SK-N-SH (cell line): ENCODE measurements at regions of chr20 and their contacts with region 1.

Region 1: GRCh38 chr20:38730989-38731737 is 6.9 kb downstream of the SLC32A1 start:
- DNase-seq: peak; percentile 90
- H3K4me3 ChIP-seq: peak overlapping the region; percentile 41 to 53
- H3K27ac ChIP-seq: no peak overlapping the region
- H3K4me1 ChIP-seq: peaks cover 0 to 16% of the 10 kb centered on the region in 2 experiments; a peak in 2 of 4 replicates
- H3K27me3 ChIP-seq: peaks cover 93% of the 10 kb centered on the region
- CTCF ChIP-seq: peak; percentile 97
- EP300 ChIP-seq: no peak
- RAD21 ChIP-seq: peak; percentile 73

Region 2: DNA sequence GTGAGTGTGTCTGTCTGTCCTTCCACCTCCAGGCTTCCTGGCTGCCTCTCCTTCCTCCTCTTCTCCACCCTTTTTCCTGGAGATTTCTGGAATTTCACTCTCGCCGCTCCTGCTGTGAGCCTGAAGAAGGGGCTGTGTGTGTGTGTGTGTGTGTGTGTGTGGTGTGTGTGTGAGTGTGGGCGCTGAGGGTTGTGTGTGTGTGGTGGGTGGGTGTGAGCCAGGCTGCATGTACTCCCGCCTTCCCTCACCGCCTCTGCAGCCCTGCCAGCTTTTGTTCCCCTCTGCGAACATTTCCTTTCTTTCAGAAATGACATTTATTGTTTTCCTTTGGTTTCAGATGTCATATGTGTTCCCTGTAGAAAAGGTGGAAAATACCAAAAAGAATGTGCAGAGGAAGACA is 1309.2 kb before region 1 on chr20:
- CTCF ChIA-PET with region 1: no interaction called
- POLR2A ChIA-PET with region 1: no interaction called
- DNase-seq: no peak
- H3K4me3 ChIP-seq: no peak overlapping the region
- H3K27ac ChIP-seq: no peak overlapping the region
- H3K4me1 ChIP-seq: peaks cover 0 to 14% of the 10 kb centered on the region in 2 experiments; a peak in 1 of 4 replicates
- H3K27me3 ChIP-seq: peaks cover 37% of the 10 kb centered on the region; the same call in 1 of the 2 replicates
- CTCF ChIP-seq: no peak
- EP300 ChIP-seq: no peak
- RAD21 ChIP-seq: no peak

Region 3: DNA sequence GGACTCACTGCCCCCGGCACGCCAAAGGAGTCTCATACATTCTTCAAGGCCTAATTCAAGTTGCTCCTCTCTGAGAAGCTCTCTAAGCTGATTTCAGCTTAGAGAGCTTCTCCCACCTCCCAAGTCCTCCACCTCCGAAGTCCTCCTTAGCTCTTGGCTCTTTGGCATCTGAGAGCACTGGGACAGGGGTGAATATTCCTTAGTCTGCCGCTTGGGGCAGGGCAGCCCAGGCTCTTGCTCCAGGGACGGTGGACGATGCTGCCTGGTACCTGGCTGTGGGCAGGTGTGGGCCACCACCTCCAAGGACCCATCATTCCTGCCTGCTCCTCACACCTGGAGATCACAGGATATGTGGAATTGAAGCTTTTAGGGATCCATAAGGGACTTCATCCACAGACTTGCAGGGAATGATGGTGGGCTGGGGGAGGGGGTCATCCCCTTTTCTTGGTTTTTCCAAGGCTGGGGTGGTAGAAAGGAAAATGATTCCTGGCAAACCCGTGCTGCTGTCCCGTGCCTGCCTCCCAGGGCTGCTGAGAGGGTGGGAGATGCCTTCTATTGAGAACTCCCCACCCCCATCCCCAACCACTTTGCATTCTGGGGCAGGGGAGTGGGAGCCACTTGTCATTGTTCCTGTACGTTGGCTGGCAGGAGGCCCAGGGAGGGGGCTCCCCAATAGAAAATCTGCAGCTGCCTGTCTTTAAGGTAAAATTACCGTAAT is 72.1 kb before region 1 on chr20:
- CTCF ChIA-PET with region 1: interaction called, 10 read pairs
- POLR2A ChIA-PET with region 1: no interaction called
- DNase-seq: peak; percentile 45
- H3K4me3 ChIP-seq: no peak overlapping the region; a peak in 1 of 4 replicates
- H3K27ac ChIP-seq: no peak overlapping the region
- H3K4me1 ChIP-seq: no peaks in the 10 kb centered on the region
- H3K27me3 ChIP-seq: no peaks in the 10 kb centered on the region
- CTCF ChIP-seq: peak; percentile 22; the same call in 1 of the 2 replicates
- EP300 ChIP-seq: no peak
- RAD21 ChIP-seq: peak; percentile 41

Region 4: DNA sequence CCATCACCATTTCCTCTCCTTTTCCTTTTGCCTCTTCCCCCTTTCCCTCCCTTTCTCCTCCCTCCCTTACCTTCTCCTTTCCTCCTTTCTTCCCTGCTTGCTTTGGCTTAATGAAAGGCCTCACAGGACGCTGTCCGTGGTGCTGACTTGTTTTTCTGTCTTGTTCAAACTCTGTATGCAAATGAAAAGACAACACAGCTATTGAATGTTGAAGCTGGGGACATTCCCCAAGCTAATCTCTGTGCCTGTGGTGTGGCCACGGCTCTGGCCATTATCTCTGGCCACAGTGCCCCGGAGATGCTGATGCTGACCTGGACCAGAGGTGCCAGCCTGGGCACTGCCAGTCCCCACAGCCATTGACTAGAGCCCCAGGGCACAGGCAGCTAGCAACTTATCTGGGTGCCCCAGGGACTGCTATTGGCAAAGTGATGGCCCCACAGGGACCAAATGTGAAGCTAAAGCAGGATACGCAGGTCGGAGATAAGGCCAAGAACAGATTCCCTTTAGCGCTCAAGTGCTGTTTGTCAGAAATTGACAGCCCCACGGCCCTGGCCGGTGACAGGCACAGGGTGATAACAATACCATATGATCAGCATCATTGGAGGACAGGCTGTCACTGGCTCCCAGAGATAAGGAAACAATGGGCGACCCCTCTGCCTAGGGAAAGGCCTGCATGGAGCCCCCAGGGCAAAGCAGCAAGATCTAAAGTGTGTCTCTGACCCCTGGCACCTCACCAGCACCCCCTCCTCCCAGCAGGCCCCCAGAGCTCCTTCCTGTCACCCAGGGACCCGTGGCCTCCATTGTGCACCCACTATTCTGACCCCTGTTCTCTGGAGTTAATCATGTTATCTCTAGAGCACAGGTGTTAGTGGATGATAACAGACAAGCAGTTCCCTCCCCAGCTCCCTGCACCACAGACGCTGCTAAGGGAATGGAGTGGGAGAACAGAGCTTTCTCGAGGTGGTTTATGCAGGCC is 38.4 kb before region 1 on chr20:
- CTCF ChIA-PET with region 1: interaction called, 47 read pairs
- POLR2A ChIA-PET with region 1: no interaction called
- DNase-seq: peak; percentile 73
- H3K4me3 ChIP-seq: no peak overlapping the region
- H3K27ac ChIP-seq: peak overlapping the region in 1 of 2 experiments; percentile 58; a peak in 2 of 4 replicates
- H3K4me1 ChIP-seq: peaks cover 0 to 20% of the 10 kb centered on the region in 2 experiments; a peak in 1 of 4 replicates
- H3K27me3 ChIP-seq: no peaks in the 10 kb centered on the region
- CTCF ChIP-seq: no peak
- EP300 ChIP-seq: peak in 1 of 2 experiments; percentile 75; a peak in 2 of 4 replicates
- RAD21 ChIP-seq: no peak

Region 5: DNA sequence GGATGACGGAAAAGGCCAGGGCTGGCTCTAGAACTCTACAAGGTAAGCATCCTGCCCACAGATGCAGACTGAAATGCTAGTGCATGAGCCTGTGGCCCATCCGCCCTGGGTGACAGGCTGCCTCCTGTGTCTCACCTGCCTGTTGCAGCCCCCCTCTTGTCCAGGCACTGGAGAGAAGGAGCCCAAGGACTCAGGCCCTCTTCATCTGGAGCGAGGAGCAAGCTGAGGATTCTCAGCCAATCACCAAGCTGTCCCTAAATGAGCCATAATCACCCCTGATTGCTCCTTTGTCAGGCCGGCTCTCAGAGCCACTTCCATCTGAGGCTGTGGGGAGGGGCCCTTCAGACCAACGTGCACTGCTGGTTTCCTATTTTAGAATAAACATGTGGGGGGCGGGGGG is 16.9 kb before region 1 on chr20:
- CTCF ChIA-PET with region 1: interaction called, 127 read pairs
- POLR2A ChIA-PET with region 1: no interaction called
- DNase-seq: no peak
- H3K4me3 ChIP-seq: no peak overlapping the region
- H3K27ac ChIP-seq: no peak overlapping the region
- H3K4me1 ChIP-seq: no peaks in the 10 kb centered on the region
- H3K27me3 ChIP-seq: peaks cover 12% of the 10 kb centered on the region
- CTCF ChIP-seq: no peak
- EP300 ChIP-seq: no peak
- RAD21 ChIP-seq: no peak

Region 6: GRCh38 chr20:38893565-38894090 is 162.5 kb after region 1 on chr20:
- CTCF ChIA-PET with region 1: interaction called, 30 read pairs
- POLR2A ChIA-PET with region 1: no interaction called
- DNase-seq: peak; percentile 91
- H3K4me3 ChIP-seq: no peak overlapping the region; a peak in 2 of 4 replicates
- H3K27ac ChIP-seq: peak overlapping the region in 1 of 2 experiments; percentile 80; a peak in 2 of 4 replicates
- H3K4me1 ChIP-seq: peaks cover 0 to 36% of the 10 kb centered on the region in 2 experiments; a peak in 1 of 4 replicates
- H3K27me3 ChIP-seq: peaks cover under 1% of the 10 kb centered on the region; the same call in 1 of the 2 replicates
- CTCF ChIP-seq: peak; percentile 83
- EP300 ChIP-seq: no peak
- RAD21 ChIP-seq: peak; percentile 88